Posterior vena cava (tissue), 2 donors: ENCODE measurements at regions of chr2 and their contacts with region 1.

Region 1: DNA sequence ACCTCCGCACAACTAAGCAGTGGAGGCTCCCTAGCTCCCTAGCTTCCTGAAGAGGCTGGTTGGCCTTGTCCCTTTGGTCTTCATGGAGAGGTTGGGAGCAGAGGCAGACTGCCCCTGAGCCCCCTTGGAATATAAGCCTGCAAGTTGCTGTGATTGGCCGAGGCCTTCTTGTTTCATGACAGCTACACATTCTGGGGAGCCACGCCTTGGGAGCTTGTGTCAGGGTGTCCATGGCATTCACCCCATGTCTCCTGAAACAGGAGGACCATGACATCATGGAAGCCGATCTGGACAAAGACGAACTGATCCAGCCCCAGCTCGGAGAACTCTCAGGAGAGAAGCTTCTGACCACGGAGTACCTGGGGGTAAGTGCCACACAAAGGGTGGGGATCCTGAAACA is 64.0 kb upstream of the B3GNT7 start:
- DNase-seq: peak; percentile 40

Region 2: GRCh38 chr2:231181860-231182512 is 149.5 kb before region 1 on chr2:
- intact Hi-C with region 1: no loop called
- DNase-seq: peak; percentile 93

Region 3: GRCh38 chr2:231399853-231400680 is 68.5 kb after region 1 on chr2:
- intact Hi-C with region 1: loop called in 1 of 2 experiments (anchors 2 kb)
- DNase-seq: no peak